CD4-positive, alpha-beta T cell (primary cell): ENCODE measurements at regions of chr19 and their contacts with region 1.

Region 1: DNA sequence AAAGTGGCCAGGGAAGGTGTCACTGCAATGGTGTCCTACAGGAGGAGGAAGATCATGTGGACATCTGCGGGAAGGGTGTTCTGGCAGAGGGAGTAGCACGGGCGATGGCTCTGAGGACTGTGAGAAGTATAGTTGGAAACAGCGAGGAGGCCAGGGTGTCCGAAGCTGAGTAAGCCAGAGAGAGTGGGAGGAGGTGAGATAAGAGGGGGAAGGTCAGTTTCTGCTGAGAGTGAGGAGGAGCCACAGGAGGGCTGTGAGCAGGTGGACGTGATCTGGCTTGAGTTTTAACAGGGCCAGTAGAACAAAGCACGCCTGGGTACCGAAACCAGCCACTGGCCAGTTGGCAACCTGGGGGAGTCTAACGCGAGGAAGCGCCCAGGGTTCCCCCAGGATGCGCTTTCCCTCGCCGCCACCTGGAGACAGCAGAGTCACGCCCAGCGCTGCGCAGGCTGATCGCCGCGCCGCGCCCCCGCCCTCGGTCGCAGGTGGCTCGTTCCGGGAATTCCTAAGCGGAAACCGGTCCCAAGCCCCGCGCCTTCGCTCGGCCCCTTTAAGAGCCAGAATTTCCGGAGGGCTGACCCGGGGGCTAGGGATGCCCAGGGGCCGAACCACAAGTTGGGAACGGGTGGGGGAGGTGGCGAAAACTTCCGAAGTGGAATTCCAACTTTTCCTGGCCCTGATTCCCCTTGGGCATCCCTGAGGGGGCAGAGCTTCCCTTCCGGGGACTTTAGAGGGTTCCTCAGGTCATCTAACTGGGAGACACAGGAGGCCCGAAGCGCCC is 1.1 kb upstream of the LSR start:
- DNase-seq: peak in 12 of 14 experiments; percentile 51 to 81 (median 63)
- ATAC-seq: peak; percentile 50
- H3K4me3 ChIP-seq: peak overlapping the region; percentile 86
- H3K4me3 Mint-ChIP-seq: peak overlapping the region; percentile 92
- H3K27ac ChIP-seq: peak overlapping the region; percentile 59 to 73
- H3K27ac Mint-ChIP-seq: peak overlapping the region; percentile 85
- H3K4me1 ChIP-seq: peaks cover 31% of the 10 kb centered on the region
- H3K4me1 Mint-ChIP-seq: peaks cover 32% of the 10 kb centered on the region
- H3K27me3 ChIP-seq: peaks cover 0 to 6% of the 10 kb centered on the region in 2 experiments
- H3K27me3 Mint-ChIP-seq: peaks cover 39% of the 10 kb centered on the region
- CTCF ChIP-seq: peak; percentile 64

Region 2: DNA sequence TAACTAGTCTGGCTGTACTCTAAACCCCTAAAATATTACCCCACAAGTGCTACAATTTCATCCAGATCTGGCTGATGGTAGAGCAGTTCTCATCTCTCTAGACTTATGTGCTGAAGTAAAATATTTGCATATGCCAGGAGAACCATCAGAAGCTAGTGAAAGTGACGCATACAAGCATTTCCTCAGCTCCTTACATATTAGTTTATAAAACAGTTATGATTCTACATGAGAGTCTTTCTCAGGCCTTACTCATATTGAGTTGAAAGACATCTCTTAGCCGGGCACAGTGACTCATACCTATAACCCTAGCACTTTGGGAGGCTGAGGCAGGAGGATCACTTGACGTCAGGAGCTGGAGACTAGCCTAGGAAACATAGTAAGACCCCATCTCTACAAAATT is 336.9 kb before region 1 on chr19:
- CTCF ChIA-PET with region 1: no interaction called
- POLR2A ChIA-PET with region 1: no interaction called
- intact Hi-C with region 1: no loop called
- DNase-seq: no peak
- ATAC-seq: no peak
- H3K4me3 ChIP-seq: no peak overlapping the region
- H3K4me3 Mint-ChIP-seq: no peak overlapping the region
- H3K27ac ChIP-seq: no peak overlapping the region
- H3K27ac Mint-ChIP-seq: no peak overlapping the region
- H3K4me1 ChIP-seq: no peaks in the 10 kb centered on the region
- H3K4me1 Mint-ChIP-seq: peaks cover 6% of the 10 kb centered on the region
- H3K27me3 ChIP-seq: peaks cover 13 to 19% of the 10 kb centered on the region in 2 experiments
- H3K27me3 Mint-ChIP-seq: peaks cover 44% of the 10 kb centered on the region
- CTCF ChIP-seq: no peak

Region 3: DNA sequence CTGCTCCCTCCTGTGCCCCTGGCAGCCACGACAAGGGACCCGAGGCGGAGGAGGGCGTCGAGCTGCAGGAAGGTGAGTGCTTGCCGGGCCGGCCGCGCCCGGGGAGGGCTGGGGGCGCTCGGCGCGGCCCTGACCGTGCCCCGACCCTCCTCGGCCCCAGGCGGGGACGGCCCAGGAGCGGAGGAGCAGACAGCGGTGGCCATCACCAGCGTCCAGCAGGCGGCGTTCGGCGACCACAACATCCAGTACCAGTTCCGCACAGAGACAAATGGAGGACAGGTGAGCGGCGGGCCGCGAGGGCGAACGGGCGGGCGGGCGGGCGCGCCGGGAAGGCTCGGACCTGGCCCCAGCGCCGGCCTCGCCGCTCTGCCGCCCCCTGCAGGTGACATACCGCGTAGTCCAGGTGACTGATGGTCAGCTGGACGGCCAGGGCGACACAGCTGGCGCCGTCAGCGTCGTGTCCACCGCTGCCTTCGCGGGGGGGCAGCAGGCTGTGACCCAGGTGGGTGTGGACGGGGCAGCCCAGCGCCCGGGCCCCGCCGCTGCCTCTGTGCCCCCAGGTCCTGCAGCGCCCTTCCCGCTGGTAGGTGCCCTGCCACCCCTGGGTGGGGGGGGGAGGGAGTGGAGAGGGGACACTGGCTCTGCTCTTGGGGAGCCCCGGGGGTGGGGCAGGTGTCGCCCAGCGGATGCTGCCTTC is 21.9 kb after region 1 on chr19:
- CTCF ChIA-PET with region 1: no interaction called
- POLR2A ChIA-PET with region 1: interaction called, 5 read pairs
- intact Hi-C with region 1: loop called in 1 of 2 experiments (anchors 2 kb)
- DNase-seq: peak; percentile 63 to 90 (median 74)
- ATAC-seq: peak; percentile 46
- H3K4me3 ChIP-seq: peak overlapping the region; percentile 32
- H3K4me3 Mint-ChIP-seq: peak overlapping the region; percentile 83
- H3K27ac ChIP-seq: peak overlapping the region in 1 of 2 donors; percentile 65
- H3K27ac Mint-ChIP-seq: peak overlapping the region; percentile 81
- H3K4me1 ChIP-seq: peaks cover 54% of the 10 kb centered on the region
- H3K4me1 Mint-ChIP-seq: peaks cover 41% of the 10 kb centered on the region
- H3K27me3 ChIP-seq: no peaks in the 10 kb centered on the region
- H3K27me3 Mint-ChIP-seq: no peaks in the 10 kb centered on the region
- CTCF ChIP-seq: peak; percentile 77

Region 4: GRCh38 chr19:35468637-35469036 is 220.9 kb after region 1 on chr19:
- CTCF ChIA-PET with region 1: no interaction called
- POLR2A ChIA-PET with region 1: no interaction called
- intact Hi-C with region 1: loop called (anchors 5 to 10 kb)
- DNase-seq: peak; percentile 42 to 85 (median 58)
- ATAC-seq: peak; percentile 100
- H3K4me3 ChIP-seq: no peak overlapping the region
- H3K4me3 Mint-ChIP-seq: no peak overlapping the region
- H3K27ac ChIP-seq: no peak overlapping the region
- H3K27ac Mint-ChIP-seq: no peak overlapping the region
- H3K4me1 ChIP-seq: peaks cover 12% of the 10 kb centered on the region
- H3K4me1 Mint-ChIP-seq: peaks cover 1% of the 10 kb centered on the region
- H3K27me3 ChIP-seq: no peaks in the 10 kb centered on the region
- H3K27me3 Mint-ChIP-seq: no peaks in the 10 kb centered on the region
- CTCF ChIP-seq: peak; percentile 55

Region 5: DNA sequence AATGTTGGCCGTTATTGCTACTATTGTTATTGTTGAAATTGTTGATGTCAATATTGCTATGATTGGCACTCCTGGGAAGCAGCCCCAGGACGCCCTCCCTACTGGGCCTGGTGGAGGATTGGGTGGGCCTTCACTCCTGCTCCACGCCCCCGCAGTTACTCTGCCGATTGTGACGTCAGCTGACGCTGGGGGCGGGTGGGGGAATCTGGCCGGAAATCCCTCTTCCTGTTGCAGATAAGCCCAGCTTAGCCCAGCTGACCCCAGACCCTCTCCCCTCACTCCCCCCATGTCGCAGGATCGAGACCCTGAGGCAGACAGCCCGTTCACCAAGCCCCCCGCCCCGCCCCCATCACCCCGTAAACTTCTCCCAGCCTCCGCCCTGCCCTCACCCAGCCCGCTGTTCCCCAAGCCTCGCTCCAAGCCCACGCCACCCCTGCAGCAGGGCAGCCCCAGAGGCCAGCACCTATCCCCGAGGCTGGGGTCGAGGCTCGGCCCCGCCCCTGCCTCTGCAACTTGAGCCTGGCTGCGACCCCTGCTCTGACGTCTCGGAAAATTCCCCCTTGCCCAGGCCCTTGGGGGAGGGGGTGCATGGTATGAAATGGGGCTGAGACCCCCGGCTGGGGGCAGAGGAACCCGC is 393.9 kb after region 1 on chr19 and contains the start of gene ETV2:
- CTCF ChIA-PET with region 1: no interaction called
- POLR2A ChIA-PET with region 1: no interaction called
- intact Hi-C with region 1: no loop called
- DNase-seq: peak in 7 of 14 experiments; percentile 10 to 75 (median 30)
- ATAC-seq: no peak
- H3K4me3 ChIP-seq: no peak within 1 kb of the TSS
- H3K4me3 Mint-ChIP-seq: peak within 1 kb of the TSS; percentile 82
- H3K27ac ChIP-seq: no peak within 1 kb of the TSS
- H3K27ac Mint-ChIP-seq: peak within 1 kb of the TSS; percentile 39
- H3K4me1 ChIP-seq: peaks cover 46% of the 10 kb centered on the region
- H3K4me1 Mint-ChIP-seq: peaks cover 28% of the 10 kb centered on the region
- H3K27me3 ChIP-seq: no peaks in the 10 kb centered on the region
- H3K27me3 Mint-ChIP-seq: no peaks in the 10 kb centered on the region
- CTCF ChIP-seq: no peak
- total RNA-seq, gene ETV2: 0.58 to 0.59 TPM